Activated naive CD4-positive, alpha-beta T cell treated with anti-CD3 and anti-CD28 coated beads for 36 hours (primary cell): ENCODE measurements at regions of chr16 and their contacts with region 1.

Region 1: GRCh38 chr16:53130159-53131049 is 75.6 kb downstream of the CHD9 start:
- DNase-seq: peak; percentile 85
- H3K4me3 Mint-ChIP-seq: peak overlapping the region; percentile 70
- H3K27ac Mint-ChIP-seq: no peak overlapping the region
- H3K4me1 Mint-ChIP-seq: peaks cover 6% of the 10 kb centered on the region
- H3K27me3 Mint-ChIP-seq: no peaks in the 10 kb centered on the region

Region 2: DNA sequence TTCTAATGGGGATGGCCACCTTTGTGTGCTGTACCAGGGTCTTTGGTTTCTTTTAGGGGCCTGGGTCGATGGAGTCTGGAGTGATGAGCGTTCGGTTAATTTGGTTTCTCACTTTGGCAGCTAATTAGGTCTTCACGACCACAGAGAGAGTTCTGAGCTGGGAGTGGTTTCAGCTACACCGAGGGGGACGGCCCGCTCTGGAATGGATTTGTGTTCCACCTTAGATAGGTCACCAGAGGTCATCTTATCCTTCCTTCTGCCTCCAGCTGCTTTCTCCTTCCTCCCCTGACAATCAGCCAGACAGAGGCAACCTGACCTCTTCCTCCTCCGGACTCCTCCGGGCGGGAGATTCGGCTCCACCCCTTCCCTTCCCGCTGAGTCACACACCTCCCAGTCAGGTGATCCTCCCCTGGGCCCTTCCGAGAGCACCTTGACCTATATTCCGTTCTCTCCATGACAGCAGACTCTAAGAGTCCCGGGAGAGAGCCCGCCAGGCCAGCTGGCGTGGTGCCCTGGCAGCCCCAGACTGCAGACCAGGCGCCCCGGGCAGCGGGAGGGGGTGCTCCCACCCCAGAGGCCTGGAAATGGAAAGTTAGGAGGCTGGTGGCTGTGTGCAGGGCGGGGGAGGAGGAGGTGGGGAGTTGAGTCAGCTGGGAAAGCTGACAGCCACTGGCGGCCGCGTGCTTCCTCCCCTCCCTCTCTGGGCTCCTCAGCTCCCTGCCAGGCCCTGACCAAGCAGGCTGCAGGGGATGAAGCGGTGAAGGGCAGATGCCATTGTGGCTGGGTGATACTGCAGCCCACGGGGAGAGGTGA is 30.9 kb before region 1 on chr16:
- CTCF ChIA-PET with region 1: no interaction called
- intact Hi-C with region 1: loop called (anchors 1 kb)
- DNase-seq: peak; percentile 68
- H3K4me3 Mint-ChIP-seq: peak overlapping the region; percentile 79
- H3K27ac Mint-ChIP-seq: peak overlapping the region; percentile 54
- H3K4me1 Mint-ChIP-seq: peaks cover 14% of the 10 kb centered on the region
- H3K27me3 Mint-ChIP-seq: peaks cover 2% of the 10 kb centered on the region

Region 3: GRCh38 chr16:53115047-53115446 is 15.4 kb before region 1 on chr16:
- CTCF ChIA-PET with region 1: no interaction called
- intact Hi-C with region 1: no loop called
- DNase-seq: no peak
- H3K4me3 Mint-ChIP-seq: no peak overlapping the region
- H3K27ac Mint-ChIP-seq: no peak overlapping the region
- H3K4me1 Mint-ChIP-seq: peaks cover 3% of the 10 kb centered on the region
- H3K27me3 Mint-ChIP-seq: no peaks in the 10 kb centered on the region

Region 4: GRCh38 chr16:53207810-53208752 is 77.7 kb after region 1 on chr16:
- CTCF ChIA-PET with region 1: interaction called, 9 read pairs
- intact Hi-C with region 1: loop called (anchors 1 kb)
- DNase-seq: peak; percentile 30
- H3K4me3 Mint-ChIP-seq: peak overlapping the region; percentile 45
- H3K27ac Mint-ChIP-seq: peak overlapping the region; percentile 34
- H3K4me1 Mint-ChIP-seq: peaks cover 9% of the 10 kb centered on the region
- H3K27me3 Mint-ChIP-seq: no peaks in the 10 kb centered on the region

Region 5: DNA sequence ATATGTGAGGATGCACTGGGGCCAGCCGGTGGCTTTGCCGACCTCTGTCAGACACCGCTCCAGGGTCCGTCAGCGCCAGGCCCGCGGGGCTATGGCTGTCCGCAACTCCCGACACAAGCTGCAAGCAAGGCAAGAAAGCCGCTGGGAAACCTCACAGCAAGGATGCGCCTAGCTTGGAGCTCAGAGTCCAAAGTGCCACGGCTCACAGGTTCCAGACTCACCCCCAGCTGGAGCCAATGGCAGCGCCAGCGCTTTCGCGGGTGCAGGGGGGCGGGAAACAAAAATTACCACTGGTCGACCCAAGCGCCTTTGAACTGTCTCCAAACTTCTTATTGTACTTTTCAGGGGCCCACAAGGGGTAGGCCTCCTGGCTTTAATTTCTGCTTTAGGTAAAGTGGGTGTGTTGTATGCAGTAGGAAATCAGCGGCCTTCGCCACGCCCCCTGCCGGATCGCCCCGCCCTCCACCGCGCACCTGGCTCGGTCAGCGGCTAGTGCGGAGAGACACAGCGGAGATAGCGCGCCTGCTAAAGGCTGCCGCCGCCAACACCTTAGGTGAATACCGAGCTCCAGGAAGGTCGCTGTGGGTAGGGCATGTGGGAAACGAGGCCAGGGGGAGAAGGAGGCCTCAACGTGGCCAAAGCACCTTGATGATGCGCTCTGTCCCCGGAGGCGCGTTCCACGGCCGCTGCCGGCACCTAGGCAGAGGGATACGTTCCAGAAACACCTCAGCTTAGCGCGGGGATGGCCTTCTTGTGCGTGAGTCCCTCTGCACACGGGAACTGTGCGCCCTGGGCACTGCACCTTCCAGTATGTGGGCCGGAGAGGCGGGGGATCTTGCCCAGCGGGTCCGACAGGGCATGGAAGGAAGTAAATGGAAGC is 242.8 kb after region 1 on chr16:
- CTCF ChIA-PET with region 1: no interaction called
- intact Hi-C with region 1: loop called (anchors 1 kb)
- DNase-seq: peak; percentile 89
- H3K4me3 Mint-ChIP-seq: no peak overlapping the region
- H3K27ac Mint-ChIP-seq: peak overlapping the region; percentile 41
- H3K4me1 Mint-ChIP-seq: peaks cover 37% of the 10 kb centered on the region
- H3K27me3 Mint-ChIP-seq: no peaks in the 10 kb centered on the region

Region 6: GRCh38 chr16:53457670-53458069 is 327.3 kb after region 1 on chr16:
- CTCF ChIA-PET with region 1: no interaction called
- intact Hi-C with region 1: loop called (anchors 2 kb)
- DNase-seq: peak; percentile 87
- H3K4me3 Mint-ChIP-seq: peak overlapping the region; percentile 57
- H3K27ac Mint-ChIP-seq: peak overlapping the region; percentile 94
- H3K4me1 Mint-ChIP-seq: peaks cover 86% of the 10 kb centered on the region
- H3K27me3 Mint-ChIP-seq: no peaks in the 10 kb centered on the region

Region 7: GRCh38 chr16:53509906-53510703 is 379.7 kb after region 1 on chr16:
- CTCF ChIA-PET with region 1: no interaction called
- intact Hi-C with region 1: loop called (anchors 1 kb)
- DNase-seq: peak; percentile 55
- H3K4me3 Mint-ChIP-seq: peak overlapping the region; percentile 10
- H3K27ac Mint-ChIP-seq: no peak overlapping the region
- H3K4me1 Mint-ChIP-seq: peaks cover 18% of the 10 kb centered on the region
- H3K27me3 Mint-ChIP-seq: no peaks in the 10 kb centered on the region

Region 8: DNA sequence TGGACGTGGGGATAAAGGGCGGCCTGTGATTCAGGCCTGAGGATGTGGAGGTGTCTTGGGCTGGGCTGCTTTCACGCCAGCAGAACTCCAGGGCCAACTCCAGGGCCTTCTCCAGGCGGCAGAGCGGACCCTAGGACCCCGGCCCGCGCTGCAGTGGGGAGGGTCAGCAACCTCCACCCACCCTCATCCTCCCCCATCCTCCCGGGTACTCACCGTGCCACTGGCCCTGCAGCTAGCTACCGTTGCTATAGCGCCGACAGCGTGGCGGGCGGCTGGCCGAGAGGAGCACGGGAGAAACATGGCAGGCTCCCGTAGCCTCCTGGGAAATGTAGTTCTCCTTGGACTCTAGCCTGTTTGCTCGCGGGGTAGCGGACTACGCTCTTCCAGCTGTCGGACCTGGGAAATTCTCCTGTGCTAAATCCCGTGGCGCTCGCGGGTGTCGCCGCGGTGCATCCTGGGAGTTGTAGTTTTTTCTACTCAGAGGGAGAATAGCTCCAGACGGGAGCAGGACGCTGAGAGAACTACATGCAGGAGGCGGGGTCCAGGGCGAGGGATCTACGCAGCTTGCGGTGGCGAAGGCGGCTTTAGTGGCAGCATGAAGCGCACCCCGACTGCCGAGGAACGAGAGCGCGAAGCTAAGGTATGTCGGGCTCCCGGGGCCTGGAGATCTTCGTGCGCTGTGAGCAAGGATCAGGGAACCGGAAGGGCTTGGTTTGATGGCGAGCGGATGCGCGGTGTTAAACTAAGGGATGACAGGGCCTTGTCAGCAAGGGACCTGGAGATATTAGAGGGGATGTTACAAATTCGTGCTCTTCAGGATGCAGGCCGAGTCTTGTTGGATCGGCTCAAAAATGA is 573.4 kb after region 1 on chr16 and contains the starts of genes FTO and RPGRIP1L:
- CTCF ChIA-PET with region 1: no interaction called
- intact Hi-C with region 1: loop called (anchors 1 kb)
- DNase-seq: peak; percentile 99
- H3K4me3 Mint-ChIP-seq: peak within 1 kb of the TSS; percentile 100
- H3K27ac Mint-ChIP-seq: peak within 1 kb of the TSS; percentile 89
- H3K4me1 Mint-ChIP-seq: peaks cover 30% of the 10 kb centered on the region
- H3K27me3 Mint-ChIP-seq: no peaks in the 10 kb centered on the region
- total RNA-seq, gene FTO: 60.2 to 63.9 TPM
- total RNA-seq, gene RPGRIP1L: 4.3 to 5.2 TPM